ENCODE measurements at regions of chr6 and their contacts with region 1.

Region 1: DNA sequence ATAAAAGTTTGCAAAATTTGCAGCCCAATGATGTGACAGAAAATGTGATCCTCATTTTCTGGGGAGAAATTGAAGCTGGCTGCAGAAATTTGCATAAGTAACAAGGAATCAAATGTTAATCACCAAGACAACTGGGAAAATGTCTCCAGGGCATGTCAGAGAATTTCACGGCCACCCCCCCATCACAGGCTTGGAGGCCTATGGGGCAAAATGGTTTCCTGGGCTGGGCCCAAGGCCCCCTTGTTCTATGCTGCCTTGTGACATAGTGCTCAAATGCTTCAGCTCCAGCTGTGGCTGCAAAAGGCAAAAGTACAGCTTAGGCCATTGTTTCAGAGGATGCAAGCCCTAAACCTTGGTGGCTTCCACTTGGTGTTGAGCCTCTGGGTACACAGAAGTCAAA is 1202.6 kb downstream of the EPHA7 start:
- DNase-seq: no peak
- H3K4me3 ChIP-seq: no peak overlapping the region
- H3K27ac ChIP-seq: no peak overlapping the region
- H3K4me1 ChIP-seq: no peaks in the 10 kb centered on the region
- H3K27me3 ChIP-seq: no peaks in the 10 kb centered on the region
- CTCF ChIP-seq: no peak
- POLR2A ChIP-seq: no peak

Region 2: GRCh38 chr6:92231220-92231701 is 14.5 kb after region 1 on chr6:
- CTCF ChIA-PET with region 1: interaction called, 10 read pairs
- POLR2A ChIA-PET with region 1: no interaction called
- dilution Hi-C with region 1: no loop called
- intact Hi-C with region 1: no loop called
- DNase-seq: no peak
- H3K4me3 ChIP-seq: no peak overlapping the region
- H3K27ac ChIP-seq: no peak overlapping the region
- H3K4me1 ChIP-seq: no peaks in the 10 kb centered on the region
- H3K27me3 ChIP-seq: no peaks in the 10 kb centered on the region
- CTCF ChIP-seq: no peak
- POLR2A ChIP-seq: no peak

Measured in endothelial cell of umbilical vein (primary cell).